ENCODE measurements at regions of chrX and their contacts with region 1.

Region 1: DNA sequence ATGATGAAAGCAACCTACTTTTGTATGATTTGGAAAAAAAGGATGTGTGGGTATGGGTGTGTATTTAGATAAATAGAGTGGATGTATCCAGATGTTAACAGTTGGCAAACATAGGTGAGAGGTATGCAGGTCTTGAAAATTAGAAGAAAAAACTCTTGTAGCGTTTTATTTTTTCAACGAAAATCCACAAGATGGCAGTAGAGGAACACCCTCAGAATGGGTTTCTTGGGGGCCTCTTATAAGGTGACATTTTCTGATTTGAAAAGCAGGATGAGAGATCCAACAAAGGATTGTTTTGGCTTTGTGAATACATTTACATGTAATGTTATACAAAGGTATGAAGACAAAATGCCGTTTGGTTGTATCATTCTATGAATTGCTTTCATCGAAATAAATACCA is 68.3 kb downstream of the FMR1NB start:
- DNase-seq: no peak
- ATAC-seq: no peak
- H3K4me3 ChIP-seq: no peak overlapping the region
- H3K27ac ChIP-seq: no peak overlapping the region
- H3K4me1 ChIP-seq: no peaks in the 10 kb centered on the region
- H3K27me3 ChIP-seq: no peaks in the 10 kb centered on the region
- CTCF ChIP-seq: peak; percentile 31 to 68 (median 50)
- POLR2A ChIP-seq: no peak

Region 2: GRCh38 chrX:147550217-147550616 is 499.2 kb before region 1 on chrX:
- intact Hi-C with region 1: no loop called
- DNase-seq: no peak
- ATAC-seq: no peak
- H3K4me3 ChIP-seq: no peak overlapping the region
- H3K27ac ChIP-seq: no peak overlapping the region
- H3K4me1 ChIP-seq: no peaks in the 10 kb centered on the region
- H3K27me3 ChIP-seq: no peaks in the 10 kb centered on the region
- CTCF ChIP-seq: peak in 5 of 12 donors; percentile 8 to 26 (median 12)
- POLR2A ChIP-seq: no peak

Region 3: GRCh38 chrX:148146121-148146520 is 96.7 kb after region 1 on chrX:
- intact Hi-C with region 1: no loop called
- DNase-seq: no peak
- ATAC-seq: no peak
- H3K4me3 ChIP-seq: no peak overlapping the region
- H3K27ac ChIP-seq: no peak overlapping the region
- H3K4me1 ChIP-seq: no peaks in the 10 kb centered on the region
- H3K27me3 ChIP-seq: no peaks in the 10 kb centered on the region
- CTCF ChIP-seq: no peak
- POLR2A ChIP-seq: no peak

Region 4: GRCh38 chrX:149274516-149275105 is 1225.2 kb after region 1 on chrX:
- intact Hi-C with region 1: loop called in 1 of 10 experiments (anchors 5 kb)
- DNase-seq: peak in 1 of 5 donors; percentile 29
- ATAC-seq: no peak
- H3K4me3 ChIP-seq: no peak overlapping the region
- H3K27ac ChIP-seq: no peak overlapping the region
- H3K4me1 ChIP-seq: no peaks in the 10 kb centered on the region
- H3K27me3 ChIP-seq: no peaks in the 10 kb centered on the region
- CTCF ChIP-seq: no peak
- POLR2A ChIP-seq: no peak

Region 5: GRCh38 chrX:149286940-149287349 is 1237.5 kb after region 1 on chrX:
- intact Hi-C with region 1: loop called in 4 of 10 experiments (anchors 5 to 10 kb)
- DNase-seq: peak in 2 of 5 donors; percentile 18 to 27
- ATAC-seq: no peak
- H3K4me3 ChIP-seq: no peak overlapping the region
- H3K27ac ChIP-seq: no peak overlapping the region
- H3K4me1 ChIP-seq: no peaks in the 10 kb centered on the region
- H3K27me3 ChIP-seq: peaks cover 0 to 4% (median 0%) of the 10 kb centered on the region in 9 donors
- CTCF ChIP-seq: peak; percentile 40 to 73 (median 54)
- POLR2A ChIP-seq: no peak

Region 6: DNA sequence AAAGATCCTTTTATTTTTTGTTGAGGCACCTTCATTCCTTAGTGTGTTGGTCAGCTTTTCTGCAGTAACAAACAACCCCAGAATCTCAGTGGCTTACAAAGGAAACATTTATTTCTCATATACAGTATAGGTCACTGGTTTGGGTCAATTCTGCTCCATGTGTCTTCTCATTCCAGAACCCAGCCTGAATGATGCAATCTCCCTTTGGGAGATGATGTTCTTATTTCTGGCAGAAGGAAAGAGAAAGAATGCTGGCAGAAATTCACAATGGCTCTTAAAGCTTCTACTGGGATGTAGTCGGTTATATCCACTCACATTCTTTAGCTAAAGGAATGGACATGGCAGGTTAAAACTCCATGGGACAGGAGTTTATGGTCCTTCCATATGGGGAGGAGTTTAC is 1413.4 kb after region 1 on chrX:
- intact Hi-C with region 1: loop called in 1 of 10 experiments (anchors 5 kb)
- DNase-seq: peak in 1 of 5 donors; percentile 8
- ATAC-seq: peak in 3 of 4 donors; percentile 39 to 71 (median 39)
- H3K4me3 ChIP-seq: no peak overlapping the region
- H3K27ac ChIP-seq: no peak overlapping the region
- H3K4me1 ChIP-seq: no peaks in the 10 kb centered on the region
- H3K27me3 ChIP-seq: peaks cover 0 to 4% (median 0%) of the 10 kb centered on the region in 9 donors
- CTCF ChIP-seq: no peak
- POLR2A ChIP-seq: no peak